Caki2 (cell line): ENCODE measurements at regions of chr1 and their contacts with region 1.

Region 1: DNA sequence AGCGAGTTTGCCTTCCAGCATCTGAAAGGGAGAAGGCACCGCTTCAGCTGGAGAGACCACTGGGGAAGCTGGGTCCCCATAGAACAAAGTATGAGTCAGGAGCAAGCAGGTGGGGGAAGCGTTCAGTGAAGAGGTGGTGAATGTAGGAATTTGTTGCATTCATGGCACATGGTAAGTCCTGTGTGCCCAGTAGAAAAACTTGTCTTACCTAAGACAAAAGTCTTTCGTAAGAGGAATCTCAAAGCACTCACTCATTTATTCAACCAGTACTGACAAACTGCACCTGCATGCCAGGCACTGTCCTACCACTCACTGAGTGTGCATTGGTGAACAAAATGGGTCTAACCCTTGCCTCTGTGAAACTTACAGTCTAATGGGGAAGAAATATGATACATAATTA is 9.2 kb upstream of the ERRFI1 start:
- DNase-seq: no peak

Region 2: GRCh38 chr1:7390604-7391000 is 644.7 kb before region 1 on chr1:
- in situ Hi-C with region 1: no loop called
- DNase-seq: no peak

Region 3: DNA sequence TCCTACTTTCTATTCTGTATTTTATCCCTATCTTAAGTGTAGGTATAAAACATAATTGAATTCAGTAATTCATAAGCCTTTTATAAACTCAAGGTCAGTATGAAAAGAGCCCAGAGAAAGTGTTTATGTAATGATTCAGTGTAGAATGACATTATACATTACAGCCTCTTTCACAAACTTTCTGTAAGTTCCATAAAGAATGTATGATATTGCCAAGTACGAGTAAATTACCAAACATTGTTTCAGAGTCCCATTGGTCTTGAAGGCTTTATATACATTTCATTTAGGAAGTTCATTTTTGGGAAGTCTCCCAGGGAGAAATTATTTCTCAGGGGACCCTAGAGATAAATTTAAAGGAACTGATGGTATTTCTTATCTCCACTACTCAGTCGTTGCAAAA is 302.0 kb before region 1 on chr1:
- in situ Hi-C with region 1: no loop called
- DNase-seq: no peak

Region 4: DNA sequence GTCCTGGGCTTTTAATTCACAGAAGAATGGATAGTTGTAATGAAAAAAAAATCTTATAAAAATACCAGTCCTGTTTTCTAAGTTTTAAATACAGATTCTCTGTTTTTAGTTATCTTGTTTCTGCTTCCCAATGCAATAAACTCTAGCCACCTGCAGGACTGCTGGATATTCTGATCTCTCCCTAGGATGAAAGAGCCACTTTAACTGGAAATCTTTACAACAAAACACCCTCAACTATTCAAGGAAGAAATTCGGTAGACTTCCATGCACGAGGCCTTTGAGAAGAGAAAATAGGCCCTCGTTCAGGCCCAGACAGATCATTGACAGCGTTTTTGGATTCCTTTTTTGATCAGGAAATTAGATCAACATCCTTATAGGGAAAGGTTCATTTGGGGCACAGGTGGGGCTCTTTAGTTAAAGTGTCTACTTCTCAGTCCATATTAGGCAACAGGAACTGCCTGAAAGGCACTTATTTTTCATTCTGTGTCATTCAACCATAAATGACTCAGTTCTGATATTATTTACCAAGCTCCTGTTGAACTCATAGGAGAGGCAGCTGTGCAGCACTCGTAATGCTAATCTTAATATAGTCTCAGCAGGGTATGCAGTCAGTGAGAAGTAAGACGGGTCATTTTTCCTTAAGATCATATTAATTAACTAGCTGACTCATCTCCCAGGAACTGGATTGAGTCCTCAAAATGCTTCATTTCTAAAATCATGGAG is 61.9 kb after region 1 on chr1:
- in situ Hi-C with region 1: loop called (anchors 5 kb)
- DNase-seq: peak; percentile 89